ENCODE measurements at regions of chr6 and their contacts with region 1.

Region 1: GRCh38 chr6:114342826-114343780 is at the start of gene HS3ST5:
- DNase-seq: peak; percentile 64 to 79
- H3K4me3 ChIP-seq: peak within 1 kb of the TSS; percentile 54
- H3K4me3 Mint-ChIP-seq: peak within 1 kb of the TSS; percentile 76
- H3K27ac Mint-ChIP-seq: no peak within 1 kb of the TSS
- H3K4me1 ChIP-seq: 0 out of 2 replicates have a peak, but pooled peaks cover 4% of the 10 kb centered on the region
- H3K4me1 Mint-ChIP-seq: no peaks in the 10 kb centered on the region
- H3K27me3 ChIP-seq: no peaks in the 10 kb centered on the region
- H3K27me3 Mint-ChIP-seq: peaks cover 9% of the 10 kb centered on the region
- CTCF ChIP-seq: peak; percentile 58 to 66
- total RNA-seq, gene HS3ST5: 0.28 and 0.29 TPM in 2 replicates

Region 2: DNA sequence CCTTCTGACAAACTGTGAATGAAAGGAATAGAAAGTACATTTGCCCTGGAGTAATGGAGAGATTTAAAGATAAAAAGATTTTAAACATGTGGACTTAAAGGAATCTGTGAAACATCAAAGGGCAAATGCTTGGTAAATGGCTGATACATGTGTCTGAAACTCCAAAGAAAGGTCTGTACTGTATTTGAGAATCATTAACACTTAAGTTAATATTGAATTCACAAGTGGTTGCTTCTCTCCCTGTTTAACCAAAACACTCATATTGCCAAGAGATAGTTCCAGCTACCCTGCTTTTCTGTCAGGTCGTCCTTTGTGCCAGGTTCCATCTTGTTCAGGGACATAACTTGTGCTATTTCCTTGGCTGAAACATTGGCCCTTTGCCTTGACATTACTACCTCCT is 171.1 kb after region 1 on chr6:
- CTCF ChIA-PET with region 1: no interaction called
- POLR2A ChIA-PET with region 1: no interaction called
- intact Hi-C with region 1: loop called (anchors 5 kb)
- DNase-seq: no peak
- H3K4me3 ChIP-seq: no peak overlapping the region
- H3K4me3 Mint-ChIP-seq: no peak overlapping the region
- H3K27ac Mint-ChIP-seq: no peak overlapping the region
- H3K4me1 ChIP-seq: peaks cover 7% of the 10 kb centered on the region; the same call in 1 of the 2 replicates
- H3K4me1 Mint-ChIP-seq: peaks cover 10% of the 10 kb centered on the region
- H3K27me3 ChIP-seq: no peaks in the 10 kb centered on the region
- H3K27me3 Mint-ChIP-seq: no peaks in the 10 kb centered on the region
- CTCF ChIP-seq: no peak

Measured in Caco-2 (cell line).